SK-N-SH (cell line): ENCODE measurements at regions of chr9 and their contacts with region 1.

Region 1: GRCh38 chr9:34554211-34555001 is 31.6 kb upstream of the ENHO start:
- DNase-seq: peak; percentile 85
- H3K4me3 ChIP-seq: no peak overlapping the region
- H3K27ac ChIP-seq: peak overlapping the region in 1 of 2 experiments; percentile 91; a peak in 2 of 4 replicates
- H3K4me1 ChIP-seq: peaks cover 0 to 79% of the 10 kb centered on the region in 2 experiments; a peak in 1 of 4 replicates
- H3K27me3 ChIP-seq: no peaks in the 10 kb centered on the region; the same call in 1 of the 2 replicates
- CTCF ChIP-seq: no peak
- EP300 ChIP-seq: 0 out of 4 replicates have a peak, but pooled peaks of 1 of the 2 experiments have one; percentile 9
- RAD21 ChIP-seq: peak; percentile 23; the same call in 1 of the 2 replicates

Region 2: DNA sequence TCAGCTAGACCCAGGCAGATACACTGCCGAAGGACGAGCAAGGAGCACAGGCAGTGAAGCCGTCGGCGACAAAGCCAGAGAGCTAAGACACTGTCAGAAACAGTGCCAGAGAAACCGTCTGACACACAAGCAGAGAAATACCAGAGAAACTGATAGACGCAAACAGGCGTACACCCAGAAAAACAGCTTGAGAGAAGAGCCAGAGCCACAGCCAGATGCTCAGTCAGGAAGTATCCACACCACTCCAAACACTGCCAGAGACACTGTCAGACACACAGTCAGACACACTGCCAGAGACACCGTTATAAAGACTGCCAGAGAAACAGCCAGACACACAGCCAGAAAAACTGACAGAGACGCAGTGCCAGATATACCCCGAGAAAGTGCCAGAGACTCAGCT is 16.0 kb after region 1 on chr9:
- CTCF ChIA-PET with region 1: interaction called, 129 read pairs
- POLR2A ChIA-PET with region 1: interaction called, 6 read pairs
- DNase-seq: peak; percentile 78
- H3K4me3 ChIP-seq: no peak overlapping the region
- H3K27ac ChIP-seq: peak overlapping the region in 1 of 2 experiments; percentile 94; a peak in 2 of 4 replicates
- H3K4me1 ChIP-seq: peaks cover 0 to 98% of the 10 kb centered on the region in 2 experiments; a peak in 2 of 4 replicates
- H3K27me3 ChIP-seq: no peaks in the 10 kb centered on the region; the same call in 1 of the 2 replicates
- CTCF ChIP-seq: no peak
- EP300 ChIP-seq: no peak; a peak in 1 of 4 replicates
- RAD21 ChIP-seq: no peak

Region 3: DNA sequence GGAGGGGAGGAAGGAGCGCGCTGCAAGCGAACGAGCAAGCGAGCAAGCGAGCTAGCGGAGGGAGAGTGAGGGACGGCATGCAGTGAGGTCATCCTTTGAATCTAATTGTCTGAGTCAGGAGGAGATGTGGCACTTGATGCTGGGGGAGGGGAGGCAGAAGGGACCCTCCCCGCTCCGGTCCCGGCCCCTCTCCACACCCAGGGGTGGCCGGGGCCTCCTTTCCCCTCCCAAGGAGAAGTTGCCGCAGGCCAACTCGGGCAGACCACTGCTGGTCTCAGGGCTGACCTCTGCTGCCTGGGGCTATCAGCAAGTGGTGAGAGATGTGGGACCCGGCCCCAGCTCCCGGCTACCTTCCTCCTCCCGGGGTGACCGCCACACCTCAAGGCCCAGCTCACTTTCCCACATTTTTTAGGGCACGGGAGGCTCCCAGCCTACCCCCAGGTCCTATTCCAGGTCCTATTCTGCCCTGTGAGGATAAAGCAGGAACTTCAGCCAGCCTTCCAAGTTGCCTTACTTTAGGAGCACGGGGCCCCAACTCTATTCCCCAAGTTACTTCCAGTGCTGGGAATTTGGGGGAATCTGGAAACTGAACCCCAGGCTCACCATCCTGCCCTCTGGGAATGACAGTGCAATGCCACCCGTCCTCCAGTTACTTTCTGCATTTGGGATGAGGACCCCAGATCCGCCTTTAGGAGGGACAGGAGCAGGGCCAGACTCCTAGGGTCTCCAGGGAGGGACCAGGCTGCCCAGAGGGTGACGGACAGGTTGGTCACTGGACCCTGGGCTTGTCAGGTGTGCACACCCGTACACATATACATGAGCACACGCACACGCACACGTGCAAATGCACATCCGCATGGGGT is 24.1 kb after region 1 on chr9:
- CTCF ChIA-PET with region 1: interaction called, 129 read pairs
- POLR2A ChIA-PET with region 1: interaction called, 10 read pairs
- DNase-seq: peak; percentile 85
- H3K4me3 ChIP-seq: peak overlapping the region; percentile 26 to 35; a peak in 3 of 4 replicates
- H3K27ac ChIP-seq: peak overlapping the region in 1 of 2 experiments; percentile 75; a peak in 2 of 4 replicates
- H3K4me1 ChIP-seq: peaks cover 0 to 86% of the 10 kb centered on the region in 2 experiments; a peak in 2 of 4 replicates
- H3K27me3 ChIP-seq: peaks cover 33% of the 10 kb centered on the region
- CTCF ChIP-seq: no peak
- EP300 ChIP-seq: no peak
- RAD21 ChIP-seq: no peak

Region 4: GRCh38 chr9:34701769-34702736 is 147.6 kb after region 1 on chr9:
- CTCF ChIA-PET with region 1: no interaction called
- POLR2A ChIA-PET with region 1: no interaction called
- DNase-seq: peak; percentile 90
- H3K4me3 ChIP-seq: peak overlapping the region; percentile 54 to 58
- H3K27ac ChIP-seq: peak overlapping the region in 1 of 2 experiments; percentile 18; a peak in 2 of 4 replicates
- H3K4me1 ChIP-seq: peaks cover 0 to 4% of the 10 kb centered on the region in 2 experiments; a peak in 1 of 4 replicates
- H3K27me3 ChIP-seq: no peaks in the 10 kb centered on the region
- CTCF ChIP-seq: peak; percentile 98
- EP300 ChIP-seq: 0 out of 4 replicates have a peak, but pooled peaks of 1 of the 2 experiments have one; percentile 24
- RAD21 ChIP-seq: peak; percentile 90